Natural killer cell (primary cell): ENCODE measurements at regions of chr19 and their contacts with region 1.

Region 1: DNA sequence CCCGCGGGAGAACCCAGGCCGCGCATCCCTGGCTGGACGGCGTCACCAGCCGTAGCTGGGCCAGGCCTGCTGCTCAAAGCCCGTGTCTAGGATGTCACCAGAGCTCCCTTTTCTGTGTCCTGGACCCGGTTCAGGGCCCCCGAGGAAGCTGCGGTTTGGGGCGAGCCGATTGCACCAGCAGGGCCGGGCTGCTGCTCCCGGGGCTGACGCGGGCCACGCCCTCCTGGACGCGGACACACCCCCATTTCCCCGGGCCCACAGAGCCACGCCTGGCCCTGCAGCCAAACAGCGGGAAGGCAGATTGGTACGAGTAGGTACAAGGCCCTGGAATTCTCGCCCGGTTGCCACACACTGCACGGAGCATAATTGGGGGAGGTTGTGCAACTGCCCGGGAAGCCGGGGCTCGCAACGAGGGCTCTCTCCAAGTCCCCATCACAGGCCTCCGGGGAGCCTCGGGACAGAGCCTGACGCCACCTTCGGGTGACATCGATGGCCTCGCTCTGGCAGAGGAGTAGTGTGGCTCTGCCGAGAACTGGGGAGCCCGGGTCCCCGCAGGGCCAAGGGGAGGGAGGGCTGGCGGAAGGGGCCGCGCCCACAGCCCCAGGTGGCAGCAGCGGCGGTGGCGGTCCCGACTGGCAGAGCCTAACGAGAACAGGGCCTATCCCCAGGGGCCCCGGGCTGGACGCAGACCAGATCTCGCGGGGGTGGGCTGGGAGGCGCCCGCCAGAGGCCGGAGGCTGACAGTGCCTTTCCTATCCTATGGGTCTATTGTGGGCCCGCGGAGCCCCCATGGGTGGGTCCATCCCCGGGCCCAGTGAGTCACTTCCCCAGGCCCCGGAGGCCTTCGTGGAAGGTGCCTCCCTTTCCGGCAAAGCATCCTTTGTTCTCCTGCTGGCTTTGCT is 23.5 kb downstream of the KCTD15 start:
- DNase-seq: peak; percentile 36 to 64
- ATAC-seq: peak; percentile 55 to 71 (median 69)
- H3K4me3 ChIP-seq: peak overlapping the region; percentile 32
- H3K4me3 Mint-ChIP-seq: peak overlapping the region; percentile 72
- H3K27ac ChIP-seq: peak overlapping the region; percentile 18
- H3K27ac Mint-ChIP-seq: no peak overlapping the region
- H3K4me1 ChIP-seq: peaks cover 30% of the 10 kb centered on the region
- H3K4me1 Mint-ChIP-seq: peaks cover 0 to 16% of the 10 kb centered on the region in 2 donors
- H3K27me3 ChIP-seq: peaks cover 6% of the 10 kb centered on the region
- H3K27me3 Mint-ChIP-seq: peaks cover 0 to 4% of the 10 kb centered on the region in 2 donors
- CTCF ChIP-seq: no peak

Region 2: DNA sequence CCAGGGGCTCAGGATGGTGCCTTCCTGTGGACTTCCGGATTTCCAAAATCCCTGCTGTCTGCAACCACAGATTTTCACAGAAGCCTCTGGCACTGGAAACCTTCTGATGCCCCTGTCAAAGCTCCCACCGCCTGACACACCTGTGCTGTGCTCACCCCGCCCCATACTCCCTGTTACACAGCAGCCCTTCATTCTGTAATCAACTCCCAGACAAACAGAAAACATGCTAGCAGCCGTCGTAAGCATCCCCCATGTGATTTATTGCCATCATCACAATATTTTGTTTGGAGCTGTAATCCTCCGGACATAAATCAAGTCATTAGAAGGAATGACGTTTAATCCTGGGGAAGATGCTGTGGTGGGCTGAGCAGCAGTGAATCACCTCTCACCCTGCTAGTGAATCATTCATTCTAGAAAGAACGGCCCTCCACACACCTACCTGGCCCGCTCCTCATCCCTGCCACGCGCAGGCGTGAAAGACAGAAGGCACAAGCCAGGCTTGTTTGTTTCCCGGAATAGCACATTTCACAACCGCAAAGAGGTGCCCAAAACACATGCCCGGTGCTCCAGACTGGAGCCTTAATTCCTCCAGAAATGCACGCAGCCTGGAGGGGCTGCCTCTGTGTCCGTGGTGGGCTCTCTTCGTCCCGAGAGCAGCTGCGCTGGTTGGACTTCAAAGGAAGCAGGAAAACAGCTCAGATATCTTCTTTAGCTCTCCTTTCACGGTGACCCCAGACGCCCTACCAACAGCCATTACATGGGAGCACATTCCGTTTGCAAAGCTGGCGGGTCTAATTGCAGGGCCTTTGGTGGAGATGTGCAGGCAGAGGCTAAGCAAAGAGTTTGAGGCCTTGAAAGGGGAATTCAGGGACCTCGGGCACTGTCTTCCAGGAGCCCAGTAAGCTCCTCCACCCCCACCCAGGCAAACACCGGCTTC is 64.8 kb before region 1 on chr19:
- intact Hi-C with region 1: no loop called
- DNase-seq: no peak
- ATAC-seq: no peak
- H3K4me3 ChIP-seq: no peak overlapping the region
- H3K4me3 Mint-ChIP-seq: no peak overlapping the region
- H3K27ac ChIP-seq: no peak overlapping the region
- H3K27ac Mint-ChIP-seq: no peak overlapping the region
- H3K4me1 ChIP-seq: no peaks in the 10 kb centered on the region
- H3K4me1 Mint-ChIP-seq: no peaks in the 10 kb centered on the region
- H3K27me3 ChIP-seq: no peaks in the 10 kb centered on the region
- H3K27me3 Mint-ChIP-seq: no peaks in the 10 kb centered on the region
- CTCF ChIP-seq: no peak

Region 3: GRCh38 chr19:33798691-33799111 is 21.4 kb before region 1 on chr19:
- intact Hi-C with region 1: loop called (anchors 1 kb)
- DNase-seq: no peak
- ATAC-seq: no peak
- H3K4me3 ChIP-seq: no peak overlapping the region
- H3K4me3 Mint-ChIP-seq: no peak overlapping the region
- H3K27ac ChIP-seq: no peak overlapping the region
- H3K27ac Mint-ChIP-seq: no peak overlapping the region
- H3K4me1 ChIP-seq: peaks cover 6% of the 10 kb centered on the region
- H3K4me1 Mint-ChIP-seq: no peaks in the 10 kb centered on the region
- H3K27me3 ChIP-seq: no peaks in the 10 kb centered on the region
- H3K27me3 Mint-ChIP-seq: peaks cover 11 to 22% of the 10 kb centered on the region in 2 donors
- CTCF ChIP-seq: no peak

Region 4: DNA sequence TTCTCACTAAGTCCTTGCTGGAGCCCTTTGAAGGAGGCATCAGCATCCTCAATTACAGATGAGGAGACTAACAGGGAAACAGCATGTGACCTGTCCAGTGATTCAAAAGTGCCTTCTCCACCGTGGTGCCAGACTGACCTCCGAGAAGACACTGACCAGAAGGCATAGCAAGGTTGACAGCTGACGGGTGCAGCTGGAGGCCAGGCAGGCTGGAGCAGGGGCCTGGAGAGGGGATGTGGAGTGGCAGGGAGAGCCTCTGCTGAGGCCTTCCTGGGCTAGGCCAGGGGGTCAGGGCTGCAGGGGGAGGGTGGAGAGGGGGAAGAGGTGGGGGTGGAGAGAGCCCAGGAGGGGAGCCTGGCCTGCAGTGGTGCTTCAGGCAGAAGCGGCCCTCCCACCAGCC is 42.9 kb after region 1 on chr19:
- intact Hi-C with region 1: no loop called
- DNase-seq: no peak
- ATAC-seq: no peak
- H3K4me3 ChIP-seq: no peak overlapping the region
- H3K4me3 Mint-ChIP-seq: no peak overlapping the region
- H3K27ac ChIP-seq: no peak overlapping the region
- H3K27ac Mint-ChIP-seq: no peak overlapping the region
- H3K4me1 ChIP-seq: no peaks in the 10 kb centered on the region
- H3K4me1 Mint-ChIP-seq: no peaks in the 10 kb centered on the region
- H3K27me3 ChIP-seq: no peaks in the 10 kb centered on the region
- H3K27me3 Mint-ChIP-seq: peaks cover 0 to 4% of the 10 kb centered on the region in 2 donors
- CTCF ChIP-seq: no peak